HAP-1 (cell line): ENCODE measurements at regions of chr10 and their contacts with region 1.

Region 1: GRCh38 chr10:67849331-67850011 is 11.5 kb upstream of the DNAJC12 start:
- DNase-seq: peak; percentile 87 to 95
- H3K4me3 ChIP-seq: peak overlapping the region; percentile 74
- H3K4me1 ChIP-seq: peaks cover 13% of the 10 kb centered on the region
- H3K27me3 ChIP-seq: no peaks in the 10 kb centered on the region

Region 2: GRCh38 chr10:68153473-68154210 is 304.2 kb after region 1 on chr10:
- in situ Hi-C with region 1: loop called (anchors 5 kb)
- DNase-seq: peak; percentile 15 to 47
- H3K4me3 ChIP-seq: no peak overlapping the region
- H3K4me1 ChIP-seq: peaks cover 35% of the 10 kb centered on the region
- H3K27me3 ChIP-seq: no peaks in the 10 kb centered on the region